GM10248 (cell line): ENCODE measurements at regions of chr20 and their contacts with region 1.

Region 1: GRCh38 chr20:45436732-45437391 is 20.9 kb downstream of the PIGT start:
- DNase-seq: peak; percentile 86
- CTCF ChIP-seq: peak; percentile 86

Region 2: GRCh38 chr20:44780226-44780625 is 656.6 kb before region 1 on chr20:
- CTCF ChIA-PET with region 1: no interaction called
- POLR2A ChIA-PET with region 1: no interaction called
- DNase-seq: peak; percentile 45
- CTCF ChIP-seq: no peak

Region 3: GRCh38 chr20:45157962-45158361 is 278.9 kb before region 1 on chr20:
- CTCF ChIA-PET with region 1: no interaction called
- POLR2A ChIA-PET with region 1: no interaction called
- DNase-seq: no peak
- CTCF ChIP-seq: no peak

Region 4: DNA sequence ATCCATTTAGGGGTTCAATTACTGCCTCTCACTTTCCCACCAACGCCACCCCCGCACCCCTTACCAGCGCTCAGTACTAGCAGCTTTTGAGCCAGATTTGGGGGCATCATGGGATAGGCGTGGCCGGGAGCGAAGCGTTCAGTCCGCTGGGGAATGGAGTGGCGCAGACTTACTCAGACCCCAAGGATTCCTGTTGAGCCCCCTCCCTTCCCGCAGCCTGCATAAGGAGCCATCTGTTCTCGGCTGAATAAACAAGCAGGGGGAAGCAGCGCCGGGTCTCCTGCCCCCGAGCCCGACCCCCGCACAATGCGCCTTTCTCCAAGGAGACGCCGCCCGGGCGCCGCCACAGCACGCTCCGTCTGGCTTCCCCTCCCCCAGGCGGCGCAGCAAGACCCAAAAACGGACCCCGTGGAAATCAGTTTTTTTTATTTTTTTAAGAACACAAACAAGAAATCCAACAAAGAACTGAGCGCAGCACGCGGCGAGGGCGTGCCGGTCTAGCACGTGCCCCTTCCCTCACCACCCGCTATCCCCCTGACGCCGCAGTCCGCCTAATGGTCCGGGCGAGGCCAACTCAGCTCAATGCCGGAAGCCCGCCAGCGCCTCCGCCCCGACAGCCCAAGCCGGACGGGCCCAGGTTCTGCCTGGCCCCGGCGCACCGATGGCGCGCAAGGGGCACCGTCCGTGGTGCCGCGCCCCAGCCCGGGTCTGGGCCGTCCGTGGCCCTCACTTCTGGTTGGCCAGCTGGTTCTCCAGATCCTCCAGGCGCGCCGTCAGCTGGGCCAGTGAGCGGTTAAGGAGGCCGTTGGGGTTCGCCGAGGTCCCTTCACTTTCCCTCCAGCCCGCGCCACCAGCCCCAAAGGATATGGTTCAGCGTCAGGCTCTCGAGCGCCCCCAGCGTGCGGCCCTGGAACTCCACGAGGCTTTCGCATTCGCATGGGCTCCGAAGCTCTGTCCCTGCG is 143.5 kb before region 1 on chr20:
- CTCF ChIA-PET with region 1: interaction called, 10 read pairs
- POLR2A ChIA-PET with region 1: no interaction called
- DNase-seq: peak; percentile 83
- CTCF ChIP-seq: peak; percentile 90

Region 5: GRCh38 chr20:45355209-45356084 is 81.4 kb before region 1 on chr20:
- CTCF ChIA-PET with region 1: interaction called, 488 read pairs
- POLR2A ChIA-PET with region 1: no interaction called
- DNase-seq: no peak
- CTCF ChIP-seq: no peak

Region 6: GRCh38 chr20:45392733-45393132 is 44.1 kb before region 1 on chr20:
- CTCF ChIA-PET with region 1: interaction called, 14 read pairs
- POLR2A ChIA-PET with region 1: no interaction called
- DNase-seq: no peak
- CTCF ChIP-seq: no peak

Region 7: DNA sequence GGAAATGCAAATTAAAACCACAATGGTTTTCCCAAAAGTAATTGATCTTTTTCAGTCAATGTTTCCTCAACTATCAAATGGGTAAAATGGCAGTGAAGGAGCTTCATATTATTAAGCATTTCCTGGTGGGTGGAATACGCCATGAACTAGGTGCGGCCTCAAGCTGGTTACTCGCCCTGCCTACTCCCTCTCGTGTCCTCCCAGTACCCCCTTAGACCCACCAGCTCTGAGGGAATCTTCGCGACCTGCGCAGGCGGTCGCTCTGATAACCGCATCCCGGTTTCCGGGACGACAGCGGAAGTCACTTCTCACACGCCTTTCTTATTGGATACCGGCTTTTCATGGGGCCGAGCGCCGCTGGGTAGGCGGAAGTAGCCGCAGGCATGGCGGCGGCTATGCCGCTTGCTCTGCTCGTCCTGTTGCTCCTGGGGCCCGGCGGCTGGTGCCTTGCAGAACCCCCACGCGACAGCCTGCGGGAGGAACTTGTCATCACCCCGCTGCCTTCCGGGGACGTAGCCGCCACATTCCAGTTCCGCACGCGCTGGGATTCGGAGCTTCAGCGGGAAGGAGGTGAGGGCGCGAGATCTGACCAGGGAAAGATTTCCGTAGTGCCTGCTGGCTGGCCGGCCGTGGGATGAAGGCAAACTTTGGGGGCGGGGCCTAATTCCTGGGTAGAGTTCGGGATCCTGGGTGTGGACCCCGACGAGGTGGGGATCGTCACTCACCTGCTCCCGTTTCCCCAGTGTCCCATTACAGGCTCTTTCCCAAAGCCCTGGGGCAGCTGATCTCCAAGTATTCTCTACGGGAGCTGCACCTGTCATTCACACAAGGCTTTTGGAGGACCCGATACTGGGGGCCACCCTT is 20.9 kb before region 1 on chr20 and contains the start of gene PIGT:
- CTCF ChIA-PET with region 1: interaction called, 47 read pairs
- POLR2A ChIA-PET with region 1: no interaction called
- DNase-seq: peak; percentile 90
- CTCF ChIP-seq: no peak

Region 8: GRCh38 chr20:45467861-45468260 is 31.0 kb after region 1 on chr20:
- CTCF ChIA-PET with region 1: interaction called, 16 read pairs
- POLR2A ChIA-PET with region 1: no interaction called
- DNase-seq: no peak
- CTCF ChIP-seq: no peak